Astrocyte of the cerebellum (primary cell): ENCODE measurements at regions of chr4 and their contacts with region 1.

Region 1: DNA sequence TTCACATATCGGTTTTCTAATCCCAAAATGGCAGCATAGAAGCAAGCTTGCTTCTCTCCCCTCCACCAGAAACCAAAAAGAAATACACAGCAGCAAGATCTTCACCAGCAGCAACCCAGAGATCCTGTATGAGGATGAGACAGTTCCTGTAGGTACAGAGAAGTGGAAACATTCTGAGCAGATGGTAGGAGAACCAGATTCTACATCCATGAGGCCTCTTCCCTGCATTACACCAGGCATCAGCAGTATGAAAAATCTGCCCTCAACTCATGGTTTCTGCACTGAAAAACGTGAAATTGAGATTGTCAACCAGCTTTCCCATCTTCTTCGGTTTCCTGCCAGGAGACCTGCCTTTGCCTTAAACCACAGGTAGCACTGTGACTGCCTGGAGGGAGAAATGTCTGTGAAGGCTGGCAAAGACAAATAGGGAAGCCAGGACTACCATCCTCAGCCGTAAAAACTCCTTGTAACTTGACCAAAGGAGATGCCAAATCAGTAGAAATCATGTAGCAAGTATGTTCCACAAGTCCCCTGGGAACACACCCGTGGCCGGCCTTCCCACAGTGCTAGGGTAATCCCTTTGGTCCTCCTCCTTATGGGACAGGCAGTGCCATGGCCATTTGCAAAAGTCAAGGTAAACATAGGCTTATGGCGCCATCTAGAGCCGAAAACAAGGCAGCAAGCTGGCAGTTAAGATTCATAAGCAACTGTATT is 24.0 kb upstream of the MTHFD2L start:
- DNase-seq: peak; percentile 86
- H3K4me3 ChIP-seq: no peak overlapping the region
- CTCF ChIP-seq: peak; percentile 88

Region 2: DNA sequence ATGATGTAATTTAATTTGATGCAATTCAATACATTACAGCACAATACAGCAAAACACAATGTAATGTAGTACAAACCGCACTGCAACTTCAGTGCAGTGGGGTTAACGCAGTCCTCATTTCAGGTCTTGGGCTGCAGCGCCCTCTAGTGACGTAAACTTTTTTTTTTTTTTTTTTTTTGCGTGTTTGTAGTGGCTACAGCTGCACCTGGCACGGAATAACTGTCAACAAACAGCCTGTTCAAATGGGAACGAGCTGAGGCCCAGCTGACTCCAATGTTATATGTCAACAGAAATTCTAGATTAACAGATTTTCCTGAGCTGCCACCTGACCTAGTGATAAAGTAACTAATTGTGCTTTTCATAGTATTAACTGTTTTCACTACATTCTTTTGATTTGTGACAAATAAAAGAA is 480.2 kb before region 1 on chr4:
- in situ Hi-C with region 1: loop called (anchors 25 kb)
- DNase-seq: peak; percentile 42
- H3K4me3 ChIP-seq: no peak overlapping the region
- CTCF ChIP-seq: peak; percentile 46

Region 3: DNA sequence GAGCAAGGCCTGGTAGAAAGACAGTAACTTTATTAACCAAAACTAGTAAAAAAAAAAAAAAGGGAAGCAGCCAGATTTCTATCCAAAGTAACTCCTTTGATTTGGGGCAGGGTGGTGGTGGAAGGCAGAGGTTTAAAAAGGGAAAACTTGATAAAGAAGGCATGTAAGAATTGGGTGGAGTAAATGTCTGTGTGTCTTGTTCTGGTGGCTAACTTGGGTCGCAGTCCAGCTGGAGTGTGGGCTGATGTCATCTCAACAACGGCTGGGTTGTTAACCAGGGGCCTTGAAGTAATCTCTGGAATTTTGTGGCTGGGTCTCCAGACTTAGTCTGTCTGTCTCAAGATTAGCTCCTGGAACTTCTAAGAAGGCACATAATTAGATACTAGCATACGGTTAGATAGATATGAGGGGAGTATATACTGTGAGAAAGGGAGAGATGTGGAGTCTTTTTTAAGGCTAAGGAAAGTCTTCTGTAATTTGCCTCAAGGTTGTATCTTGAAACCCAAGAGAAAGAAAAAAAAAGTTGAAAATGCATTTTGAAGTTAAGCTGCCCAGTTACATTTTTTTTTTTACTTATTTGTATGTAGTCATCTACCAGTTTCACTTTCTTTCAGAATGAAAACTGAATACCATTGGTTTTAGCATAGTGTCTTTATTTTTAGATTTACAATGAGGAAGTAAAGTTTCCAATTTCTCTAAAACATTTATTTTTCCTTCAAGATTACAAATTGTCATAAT is 72.3 kb after region 1 on chr4:
- in situ Hi-C with region 1: no loop called
- DNase-seq: peak; percentile 38
- H3K4me3 ChIP-seq: no peak overlapping the region
- CTCF ChIP-seq: no peak